ENCODE measurements at regions of chr2 and their contacts with region 1.

Region 1: DNA sequence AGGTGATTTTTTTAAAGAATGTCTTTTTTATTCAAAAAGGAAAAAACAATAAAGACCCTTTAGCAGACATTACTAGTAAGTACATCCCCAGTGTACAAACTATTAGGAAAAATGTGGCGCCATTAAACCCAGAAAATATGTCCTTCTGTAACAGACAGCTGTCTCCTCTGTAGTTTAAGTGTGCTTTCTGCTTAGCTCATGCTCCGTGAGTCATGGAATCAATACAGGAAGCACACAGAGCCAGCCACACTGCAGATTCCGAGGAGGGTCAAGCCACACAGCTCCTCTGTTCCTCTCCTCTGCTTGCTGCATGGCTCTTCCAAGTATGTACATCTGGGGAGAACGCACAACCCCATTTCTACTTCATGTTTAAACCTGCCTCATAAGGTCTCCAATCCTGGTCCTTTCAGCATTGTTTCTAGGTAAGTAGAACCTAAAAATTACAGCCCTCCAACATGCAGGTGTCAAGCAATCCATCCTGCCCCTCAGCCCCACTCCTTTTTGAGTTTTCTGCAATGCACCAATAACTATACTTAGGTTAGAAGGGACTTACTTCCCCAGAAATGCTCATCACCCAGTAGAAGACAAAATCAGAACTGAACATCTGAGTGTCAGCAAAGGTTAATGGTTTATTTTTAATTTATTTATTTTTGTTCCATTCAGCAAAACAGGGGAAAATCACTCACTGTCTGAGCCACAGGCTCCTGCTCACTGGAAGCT is 37.5 kb downstream of the ACVR1 start:
- DNase-seq: peak; percentile 57
- H3K4me3 ChIP-seq: peak overlapping the region; percentile 55
- H3K27ac ChIP-seq: peak overlapping the region; percentile 97
- H3K27me3 ChIP-seq: no peaks in the 10 kb centered on the region
- CTCF ChIP-seq: no peak

Region 2: DNA sequence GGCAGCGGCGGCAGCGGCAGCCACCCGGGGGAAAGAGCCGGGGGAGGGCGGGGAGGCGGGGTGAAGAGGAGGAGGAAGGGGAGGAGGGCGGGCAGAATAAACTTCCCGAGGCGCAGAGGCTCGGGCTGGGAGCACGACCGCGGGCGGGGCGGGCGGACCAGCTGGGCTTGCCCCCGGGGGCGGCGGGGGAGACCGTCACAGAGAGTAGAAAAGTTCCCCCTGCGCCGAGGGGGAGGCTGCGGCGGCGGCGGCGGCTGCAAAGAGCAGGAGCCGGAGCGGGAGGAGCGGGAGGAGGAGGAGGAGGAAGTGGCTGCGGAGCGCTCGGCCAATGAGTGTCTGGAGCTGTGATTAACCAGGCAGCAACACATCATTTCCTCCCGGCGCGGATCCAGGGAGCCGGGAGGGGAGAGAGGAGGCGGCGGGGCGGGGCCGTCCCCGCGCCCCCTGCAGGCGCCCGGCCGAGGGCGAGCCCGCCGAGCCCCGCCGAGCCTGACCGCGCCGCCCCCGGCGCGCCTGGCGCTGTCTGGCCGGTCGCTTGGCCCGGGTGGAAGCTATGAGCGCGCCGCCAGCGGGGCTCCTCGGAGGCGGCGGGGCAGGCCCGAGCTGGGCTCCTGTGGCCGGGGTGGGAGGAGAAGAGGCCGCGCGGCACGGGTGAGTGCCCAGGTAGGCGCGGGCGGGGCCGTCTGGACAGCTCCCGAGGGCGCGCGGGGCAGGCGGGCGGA is 37.6 kb after region 1 on chr2 and contains the start of gene ACVR1:
- CTCF ChIA-PET with region 1: interaction called, 7 read pairs
- POLR2A ChIA-PET with region 1: interaction called, 10 read pairs
- DNase-seq: peak; percentile 96
- H3K4me3 ChIP-seq: peak within 1 kb of the TSS; percentile 93
- H3K27ac ChIP-seq: peak within 1 kb of the TSS; percentile 68
- H3K27me3 ChIP-seq: no peaks in the 10 kb centered on the region
- CTCF ChIP-seq: peak; percentile 37
- polyA plus RNA-seq, gene ACVR1: 50.6 and 53.0 TPM in 2 replicates

Region 3: GRCh38 chr2:157980020-157980419 is 141.4 kb after region 1 on chr2:
- CTCF ChIA-PET with region 1: no interaction called
- POLR2A ChIA-PET with region 1: no interaction called
- DNase-seq: no peak
- H3K4me3 ChIP-seq: no peak overlapping the region
- H3K27ac ChIP-seq: no peak overlapping the region
- H3K27me3 ChIP-seq: no peaks in the 10 kb centered on the region
- CTCF ChIP-seq: no peak

Region 4: GRCh38 chr2:158060862-158061435 is 222.3 kb after region 1 on chr2:
- CTCF ChIA-PET with region 1: no interaction called
- POLR2A ChIA-PET with region 1: no interaction called
- DNase-seq: no peak
- H3K4me3 ChIP-seq: no peak overlapping the region
- H3K27ac ChIP-seq: no peak overlapping the region
- H3K27me3 ChIP-seq: no peaks in the 10 kb centered on the region
- CTCF ChIP-seq: no peak

Measured in AG04450 (cell line).